ENCODE measurements at regions of chr1 and their contacts with region 1.

Region 1: DNA sequence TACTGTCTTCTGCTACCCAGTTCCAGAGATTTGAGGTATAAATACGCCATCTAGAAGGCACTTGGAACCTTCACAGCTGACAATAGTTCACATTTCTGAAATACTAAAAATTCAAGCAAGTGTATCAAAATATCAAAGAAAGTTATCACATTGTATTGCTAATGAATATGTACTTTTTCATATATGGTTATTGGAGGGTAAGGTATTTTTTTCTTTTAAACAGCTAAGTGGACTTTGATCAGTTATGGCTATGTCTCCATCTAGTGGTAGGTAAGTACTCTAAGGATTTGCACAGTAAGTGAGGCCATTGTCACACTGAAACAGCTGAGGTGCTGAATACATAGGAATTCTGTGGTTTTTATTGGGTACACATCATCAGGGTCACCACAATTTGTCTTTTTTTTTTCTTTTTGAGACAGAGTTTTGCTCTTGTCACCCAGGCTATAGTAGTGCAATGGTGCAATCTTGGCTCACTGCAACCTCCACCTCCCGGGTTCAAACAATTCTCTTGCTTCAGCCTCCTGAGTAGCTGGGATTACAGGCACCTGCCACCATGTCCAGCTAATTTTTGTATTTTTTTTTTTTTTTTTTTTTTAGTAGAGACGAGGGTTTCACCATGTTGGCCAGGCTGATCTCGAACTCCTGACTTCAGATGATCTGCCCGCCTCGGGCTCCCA is 49.1 kb upstream of the CR2 start:
- DNase-seq: no peak
- ATAC-seq: peak; percentile 80
- H3K4me3 Mint-ChIP-seq: no peak overlapping the region
- H3K27ac Mint-ChIP-seq: no peak overlapping the region
- H3K4me1 Mint-ChIP-seq: peaks cover 31% of the 10 kb centered on the region
- H3K27me3 Mint-ChIP-seq: no peaks in the 10 kb centered on the region
- CTCF ChIP-seq: peak; percentile 46

Region 2: DNA sequence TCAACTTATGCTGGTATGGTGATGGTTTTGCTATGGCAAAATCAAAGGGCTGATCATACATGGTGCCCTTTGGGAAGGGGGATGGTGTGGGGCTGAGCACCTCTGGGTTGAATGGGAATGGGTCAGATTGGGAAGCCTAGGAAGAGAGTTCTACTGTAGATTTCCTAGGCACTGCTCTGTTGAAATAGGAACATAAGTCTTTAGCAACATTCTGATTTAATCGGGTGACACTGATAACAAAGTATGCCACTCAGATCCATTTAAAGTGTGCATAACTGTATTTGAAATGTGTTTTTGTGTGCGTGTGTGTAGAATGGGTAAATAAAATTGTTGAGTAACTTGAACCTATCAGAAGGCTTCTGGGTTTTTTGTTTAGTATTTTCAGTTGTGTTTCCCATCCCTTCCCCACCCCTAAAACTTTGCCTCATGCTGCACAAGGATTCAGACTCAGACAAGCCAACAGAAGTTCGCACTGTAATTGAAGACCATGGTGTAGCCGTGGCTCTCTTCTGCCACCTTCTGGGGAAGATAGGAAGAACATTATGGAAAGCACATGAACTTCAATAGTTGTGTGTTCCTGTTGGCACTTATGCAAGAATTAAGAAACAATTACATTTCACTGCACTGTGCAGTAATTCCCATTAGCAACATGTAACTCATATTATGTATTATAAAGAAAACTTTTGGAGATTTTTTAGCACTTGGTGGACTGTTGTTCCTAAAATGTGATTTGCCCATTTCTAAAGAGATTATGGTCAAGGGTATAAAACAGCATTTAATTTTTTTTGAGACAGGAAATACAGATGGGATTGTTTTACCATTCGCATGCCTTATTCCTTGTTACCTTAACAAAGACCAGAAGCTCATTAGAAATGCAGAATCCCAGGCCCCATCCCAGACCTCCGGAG is 327.3 kb before region 1 on chr1:
- CTCF ChIA-PET with region 1: interaction called, 146 read pairs
- POLR2A ChIA-PET with region 1: no interaction called
- intact Hi-C with region 1: no loop called
- DNase-seq: no peak
- ATAC-seq: peak; percentile 95
- H3K4me3 Mint-ChIP-seq: no peak overlapping the region
- H3K27ac Mint-ChIP-seq: no peak overlapping the region
- H3K4me1 Mint-ChIP-seq: no peaks in the 10 kb centered on the region
- H3K27me3 Mint-ChIP-seq: no peaks in the 10 kb centered on the region
- CTCF ChIP-seq: no peak

Region 3: GRCh38 chr1:207181838-207182237 is 223.1 kb before region 1 on chr1:
- CTCF ChIA-PET with region 1: interaction called, 36 read pairs
- POLR2A ChIA-PET with region 1: no interaction called
- intact Hi-C with region 1: loop called (anchors 1 kb)
- DNase-seq: no peak
- ATAC-seq: no peak
- H3K4me3 Mint-ChIP-seq: no peak overlapping the region
- H3K27ac Mint-ChIP-seq: no peak overlapping the region
- H3K4me1 Mint-ChIP-seq: peaks cover 2% of the 10 kb centered on the region
- H3K27me3 Mint-ChIP-seq: peaks cover 3% of the 10 kb centered on the region
- CTCF ChIP-seq: no peak

Region 4: GRCh38 chr1:207454046-207454964 is 49.3 kb after region 1 on chr1 and contains the start of gene CR2:
- CTCF ChIA-PET with region 1: interaction called, 47 read pairs
- POLR2A ChIA-PET with region 1: interaction called, 11 read pairs
- intact Hi-C with region 1: no loop called
- DNase-seq: peak; percentile 74
- ATAC-seq: peak; percentile 90
- H3K4me3 Mint-ChIP-seq: no peak within 1 kb of the TSS
- H3K27ac Mint-ChIP-seq: no peak within 1 kb of the TSS
- H3K4me1 Mint-ChIP-seq: peaks cover 4% of the 10 kb centered on the region
- H3K27me3 Mint-ChIP-seq: no peaks in the 10 kb centered on the region
- CTCF ChIP-seq: no peak
- total RNA-seq, gene CR2: 30.7 and 34.1 TPM in 2 replicates

Region 5: DNA sequence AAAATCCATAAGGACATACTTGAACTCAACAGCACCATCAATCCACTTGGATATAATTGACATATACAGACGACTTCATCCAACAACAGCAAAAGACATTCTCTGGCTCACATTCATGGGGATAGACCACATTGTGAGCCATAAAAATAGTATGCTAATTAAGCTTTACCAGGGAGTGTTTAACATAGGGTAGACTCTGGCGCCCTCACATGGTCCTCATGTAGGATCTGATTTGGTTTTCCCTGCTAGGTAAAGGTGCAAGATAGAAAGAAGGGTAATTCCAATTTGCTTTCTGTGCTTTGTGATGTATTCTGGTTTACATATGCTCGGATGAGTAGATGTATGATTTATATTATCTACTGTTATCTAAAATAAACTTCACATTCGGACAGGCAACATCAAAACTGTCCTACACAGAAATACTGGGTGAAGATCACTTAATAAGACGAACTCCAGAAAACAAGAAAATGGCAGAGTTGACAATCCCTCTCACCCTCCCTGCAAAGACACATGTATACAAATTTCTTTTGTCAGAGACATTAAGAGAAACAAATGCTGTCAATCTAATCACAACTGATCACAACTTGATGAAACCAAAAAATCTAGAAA is 267.6 kb after region 1 on chr1:
- CTCF ChIA-PET with region 1: no interaction called
- POLR2A ChIA-PET with region 1: no interaction called
- intact Hi-C with region 1: no loop called
- DNase-seq: no peak
- ATAC-seq: no peak
- H3K4me3 Mint-ChIP-seq: no peak overlapping the region
- H3K27ac Mint-ChIP-seq: no peak overlapping the region
- H3K4me1 Mint-ChIP-seq: peaks cover 20% of the 10 kb centered on the region
- H3K27me3 Mint-ChIP-seq: peaks cover 23% of the 10 kb centered on the region
- CTCF ChIP-seq: no peak